T-cell (primary cell): ENCODE measurements at regions of chr2 and their contacts with region 1.

Region 1: DNA sequence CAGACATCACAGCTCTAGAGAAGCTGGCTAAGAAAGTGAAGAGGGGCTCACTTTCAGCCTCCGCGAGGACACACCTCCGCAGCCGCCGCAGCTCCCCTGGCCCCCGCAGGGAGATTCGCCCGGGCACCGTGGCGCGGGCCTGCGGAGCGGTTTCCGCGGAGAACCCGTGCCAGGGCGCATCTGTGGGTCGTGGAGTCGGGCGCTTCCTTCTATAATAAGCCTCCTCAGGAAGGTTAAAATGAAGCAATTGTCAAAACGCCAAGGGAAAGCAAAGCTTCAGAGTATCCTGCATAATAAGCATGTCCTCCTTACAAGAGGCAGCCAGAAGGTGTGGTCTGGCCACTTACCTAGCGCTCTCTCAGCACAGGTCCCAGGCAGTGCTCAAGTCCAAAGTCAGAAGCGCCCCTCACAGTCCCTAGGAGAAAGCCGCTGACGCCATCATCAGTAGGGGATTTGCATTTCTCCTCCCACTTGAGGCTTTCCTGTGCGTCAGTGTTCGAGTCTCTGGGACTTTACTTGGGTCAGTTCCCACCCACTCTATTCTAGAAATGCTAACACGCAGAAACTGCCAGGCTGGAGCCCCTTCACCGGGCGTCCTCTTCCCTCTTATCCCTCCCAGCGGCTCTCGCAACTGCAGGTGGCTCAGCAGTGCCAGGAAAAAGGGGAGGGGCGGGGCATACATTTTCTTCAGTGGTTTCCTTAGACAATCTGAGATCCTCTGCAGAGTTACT is at the start of gene STAT4:
- DNase-seq: peak; percentile 43 to 95 (median 85)
- ATAC-seq: peak; percentile 84 to 88 (median 84)
- H3K4me3 ChIP-seq: peak within 1 kb of the TSS; percentile 91 to 98
- H3K4me3 Mint-ChIP-seq: peak within 1 kb of the TSS; percentile 90 to 93 (median 90)
- H3K27ac ChIP-seq: peak within 1 kb of the TSS; percentile 99
- H3K27ac Mint-ChIP-seq: peak within 1 kb of the TSS; percentile 95 to 96
- H3K4me1 ChIP-seq: peaks cover 27 to 31% of the 10 kb centered on the region in 2 experiments
- H3K4me1 Mint-ChIP-seq: peaks cover 63 to 67% (median 64%) of the 10 kb centered on the region in 3 donors
- H3K27me3 ChIP-seq: no peaks in the 10 kb centered on the region
- H3K27me3 Mint-ChIP-seq: no peaks in the 10 kb centered on the region
- total RNA-seq, gene STAT4: 79.5 to 141 (median 91.7) TPM

Region 2: GRCh38 chr2:191059308-191059707 is 91.5 kb before region 1 on chr2:
- CTCF ChIA-PET with region 1: interaction called, 218 to 322 read pairs
- POLR2A ChIA-PET with region 1: interaction called, 8 to 14 read pairs
- DNase-seq: no peak
- ATAC-seq: no peak
- H3K4me3 ChIP-seq: no peak overlapping the region
- H3K4me3 Mint-ChIP-seq: no peak overlapping the region
- H3K27ac ChIP-seq: no peak overlapping the region
- H3K27ac Mint-ChIP-seq: peak overlapping the region; percentile 65 to 84
- H3K4me1 ChIP-seq: peaks cover 38 to 39% of the 10 kb centered on the region in 2 experiments
- H3K4me1 Mint-ChIP-seq: peaks cover 68 to 75% (median 72%) of the 10 kb centered on the region in 3 donors
- H3K27me3 ChIP-seq: no peaks in the 10 kb centered on the region
- H3K27me3 Mint-ChIP-seq: no peaks in the 10 kb centered on the region

Region 3: GRCh38 chr2:191070276-191070675 is 80.5 kb before region 1 on chr2:
- CTCF ChIA-PET with region 1: interaction called, 14 to 26 read pairs
- POLR2A ChIA-PET with region 1: interaction called in 1 of 2 experiments, 14 read pairs
- DNase-seq: no peak
- ATAC-seq: peak in 3 of 4 experiments; percentile 19 to 23 (median 22)
- H3K4me3 ChIP-seq: no peak overlapping the region
- H3K4me3 Mint-ChIP-seq: peak overlapping the region in 2 of 3 donors; percentile 21 to 47
- H3K27ac ChIP-seq: peak overlapping the region; percentile 48
- H3K27ac Mint-ChIP-seq: peak overlapping the region; percentile 92 to 93
- H3K4me1 ChIP-seq: peaks cover 16 to 29% of the 10 kb centered on the region in 2 experiments
- H3K4me1 Mint-ChIP-seq: peaks cover 50 to 69% (median 60%) of the 10 kb centered on the region in 3 donors
- H3K27me3 ChIP-seq: no peaks in the 10 kb centered on the region
- H3K27me3 Mint-ChIP-seq: no peaks in the 10 kb centered on the region

Region 4: DNA sequence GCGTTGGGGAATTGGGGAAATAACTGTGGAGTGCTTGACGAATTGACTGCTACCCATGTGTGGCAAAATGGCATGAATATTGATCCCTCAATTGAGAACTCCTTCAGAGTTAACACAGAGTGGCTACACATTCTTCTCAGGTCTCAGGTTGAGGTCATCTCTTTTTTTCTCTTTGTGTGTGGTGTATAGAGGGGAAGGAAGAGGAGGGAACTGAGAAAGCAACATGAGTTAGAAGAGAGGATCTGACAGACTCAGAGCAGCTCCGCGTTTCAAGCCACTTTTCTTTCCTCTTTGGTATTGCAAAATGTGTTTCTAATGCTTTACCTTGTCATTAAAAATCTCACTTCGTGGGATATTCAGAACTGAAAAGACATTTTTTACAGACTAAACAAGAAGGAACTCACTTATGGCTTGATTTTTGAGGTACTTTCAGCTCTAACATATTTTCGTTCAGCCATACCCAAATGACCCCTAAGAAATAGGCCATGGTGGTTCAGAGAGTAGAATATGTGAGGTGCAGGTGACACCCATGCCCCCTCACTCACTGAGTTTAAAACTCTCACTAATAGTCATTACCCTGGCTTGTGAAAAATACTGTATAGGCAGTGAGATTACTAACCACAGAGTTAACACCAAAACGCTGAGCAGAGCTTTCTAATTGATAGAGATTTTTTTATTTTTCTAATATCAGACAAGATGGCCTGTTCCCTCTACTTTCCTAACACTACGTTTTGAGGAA is 22.4 kb before region 1 on chr2:
- CTCF ChIA-PET with region 1: interaction called, 4 to 6 read pairs
- POLR2A ChIA-PET with region 1: interaction called, 5 to 14 read pairs
- DNase-seq: peak in 8 of 35 experiments; percentile 6 to 58 (median 19)
- ATAC-seq: peak; percentile 64 to 85 (median 68)
- H3K4me3 ChIP-seq: peak overlapping the region in 1 of 2 donors; percentile 8
- H3K4me3 Mint-ChIP-seq: peak overlapping the region; percentile 5 to 34 (median 26)
- H3K27ac ChIP-seq: peak overlapping the region; percentile 84
- H3K27ac Mint-ChIP-seq: peak overlapping the region; percentile 70 to 82
- H3K4me1 ChIP-seq: peaks cover 0 to 20% of the 10 kb centered on the region in 2 experiments
- H3K4me1 Mint-ChIP-seq: peaks cover 56 to 69% (median 66%) of the 10 kb centered on the region in 3 donors
- H3K27me3 ChIP-seq: no peaks in the 10 kb centered on the region
- H3K27me3 Mint-ChIP-seq: no peaks in the 10 kb centered on the region

Region 5: DNA sequence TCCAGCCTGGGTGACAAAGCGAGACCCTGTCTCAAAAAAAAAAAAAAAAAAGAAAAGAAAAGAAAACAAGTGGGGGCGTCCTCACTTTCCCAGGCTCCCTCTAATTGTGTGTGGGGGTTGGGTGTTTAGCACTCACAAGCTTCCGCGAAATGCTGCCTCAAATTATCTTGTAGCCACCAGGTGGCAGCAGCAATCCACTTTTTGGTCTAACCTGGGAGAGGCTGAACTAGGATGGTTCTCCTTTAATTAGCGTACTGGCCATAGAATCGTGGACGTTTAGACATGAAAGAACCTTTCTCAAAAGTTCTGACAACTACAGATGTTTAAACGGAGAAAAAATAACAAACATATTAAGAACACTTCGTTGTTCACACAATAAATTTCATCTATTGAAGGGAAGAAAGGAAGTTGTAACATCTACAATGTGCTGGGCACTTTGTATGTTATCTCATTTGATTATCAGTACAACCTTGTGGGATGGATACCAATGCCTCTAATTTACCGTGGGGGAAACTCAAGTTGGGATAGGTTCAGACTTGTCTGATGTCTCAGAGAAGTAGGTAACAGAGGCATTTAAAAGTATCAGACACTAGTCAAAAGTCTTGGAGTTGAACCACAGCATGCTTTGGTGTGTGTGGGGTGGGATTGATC is 404.5 kb after region 1 on chr2:
- CTCF ChIA-PET with region 1: no interaction called
- POLR2A ChIA-PET with region 1: interaction called, 3 to 11 read pairs
- DNase-seq: peak; percentile 42 to 87 (median 70)
- ATAC-seq: peak; percentile 63 to 88 (median 74)
- H3K4me3 ChIP-seq: no peak overlapping the region
- H3K4me3 Mint-ChIP-seq: no peak overlapping the region
- H3K27ac ChIP-seq: no peak overlapping the region
- H3K27ac Mint-ChIP-seq: no peak overlapping the region
- H3K4me1 ChIP-seq: no peaks in the 10 kb centered on the region
- H3K4me1 Mint-ChIP-seq: peaks cover 2 to 5% (median 3%) of the 10 kb centered on the region in 3 donors
- H3K27me3 ChIP-seq: peaks cover 0 to 7% of the 10 kb centered on the region in 2 experiments
- H3K27me3 Mint-ChIP-seq: peaks cover 13 to 16% of the 10 kb centered on the region in 2 donors